ENCODE measurements at regions of chr2 and their contacts with region 1.

Region 1: GRCh38 chr2:190880378-190881073 is at the start of gene GLS:
- DNase-seq: peak; percentile 90 to 98 (median 95)
- ATAC-seq: peak; percentile 76 to 80 (median 79)
- H3K4me3 ChIP-seq: peak within 1 kb of the TSS; percentile 76 to 86
- H3K4me3 Mint-ChIP-seq: peak within 1 kb of the TSS; percentile 92 to 98 (median 96)
- H3K27ac ChIP-seq: peak within 1 kb of the TSS; percentile 93
- H3K27ac Mint-ChIP-seq: peak within 1 kb of the TSS; percentile 97 to 99
- H3K4me1 ChIP-seq: peaks cover 28 to 32% of the 10 kb centered on the region in 2 experiments
- H3K4me1 Mint-ChIP-seq: peaks cover 53 to 59% (median 59%) of the 10 kb centered on the region in 3 donors
- H3K27me3 ChIP-seq: no peaks in the 10 kb centered on the region
- H3K27me3 Mint-ChIP-seq: no peaks in the 10 kb centered on the region
- total RNA-seq, gene GLS: 192 to 233 (median 209) TPM

Region 2: DNA sequence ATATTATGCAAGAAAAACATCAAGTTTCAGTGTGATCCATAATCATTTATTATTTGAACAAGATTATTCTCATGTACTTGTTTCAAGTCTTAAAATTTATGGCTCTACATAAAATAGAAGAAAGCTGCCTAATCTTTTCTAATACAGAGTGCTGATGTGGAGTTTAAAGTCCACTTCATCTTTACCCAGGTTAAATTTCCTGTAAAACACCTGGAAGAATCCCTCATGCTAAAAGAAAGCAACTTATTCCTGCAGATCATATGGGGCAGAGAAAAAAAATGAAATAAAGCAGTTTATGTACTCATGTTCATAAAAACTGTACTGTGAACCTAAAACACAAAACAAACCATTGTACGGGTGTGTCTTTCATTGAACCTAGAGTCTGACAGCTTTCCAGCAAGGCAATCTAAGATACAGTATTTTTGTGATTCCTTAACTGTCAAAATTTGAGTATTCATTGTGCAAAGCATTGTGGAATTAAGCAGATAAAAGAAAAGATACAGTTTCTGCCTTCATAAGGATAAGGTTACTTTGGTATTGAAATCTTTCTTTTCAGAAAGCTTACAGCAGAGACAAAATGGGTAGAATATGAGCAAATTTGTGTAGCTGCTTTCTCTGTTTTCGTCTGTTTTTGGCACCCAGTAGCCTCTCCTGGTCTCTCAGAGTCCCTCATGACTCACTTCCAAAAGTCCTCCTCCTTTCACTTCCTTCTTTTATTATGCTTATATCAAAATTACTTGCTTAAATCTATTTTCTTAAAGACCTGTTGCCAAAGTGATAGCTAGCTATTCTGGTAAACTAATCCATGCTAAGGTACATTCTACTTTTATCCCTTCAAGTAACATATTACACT is 26.8 kb before region 1 on chr2:
- CTCF ChIA-PET with region 1: interaction called, 12 to 22 read pairs
- POLR2A ChIA-PET with region 1: interaction called, 6 to 10 read pairs
- DNase-seq: no peak
- ATAC-seq: no peak
- H3K4me3 ChIP-seq: no peak overlapping the region
- H3K4me3 Mint-ChIP-seq: no peak overlapping the region
- H3K27ac ChIP-seq: no peak overlapping the region
- H3K27ac Mint-ChIP-seq: no peak overlapping the region
- H3K4me1 ChIP-seq: no peaks in the 10 kb centered on the region
- H3K4me1 Mint-ChIP-seq: peaks cover 0 to 2% (median 2%) of the 10 kb centered on the region in 3 donors
- H3K27me3 ChIP-seq: no peaks in the 10 kb centered on the region
- H3K27me3 Mint-ChIP-seq: no peaks in the 10 kb centered on the region

Region 3: GRCh38 chr2:190891372-190891771 is 10.8 kb after region 1 on chr2:
- CTCF ChIA-PET with region 1: interaction called, 5 to 10 read pairs
- POLR2A ChIA-PET with region 1: interaction called, 3 to 33 read pairs
- DNase-seq: no peak
- ATAC-seq: no peak
- H3K4me3 ChIP-seq: no peak overlapping the region
- H3K4me3 Mint-ChIP-seq: no peak overlapping the region
- H3K27ac ChIP-seq: no peak overlapping the region
- H3K27ac Mint-ChIP-seq: peak overlapping the region; percentile 60 to 65
- H3K4me1 ChIP-seq: peaks cover 6 to 27% of the 10 kb centered on the region in 2 experiments
- H3K4me1 Mint-ChIP-seq: peaks cover 71 to 79% (median 74%) of the 10 kb centered on the region in 3 donors
- H3K27me3 ChIP-seq: no peaks in the 10 kb centered on the region
- H3K27me3 Mint-ChIP-seq: no peaks in the 10 kb centered on the region

Region 4: DNA sequence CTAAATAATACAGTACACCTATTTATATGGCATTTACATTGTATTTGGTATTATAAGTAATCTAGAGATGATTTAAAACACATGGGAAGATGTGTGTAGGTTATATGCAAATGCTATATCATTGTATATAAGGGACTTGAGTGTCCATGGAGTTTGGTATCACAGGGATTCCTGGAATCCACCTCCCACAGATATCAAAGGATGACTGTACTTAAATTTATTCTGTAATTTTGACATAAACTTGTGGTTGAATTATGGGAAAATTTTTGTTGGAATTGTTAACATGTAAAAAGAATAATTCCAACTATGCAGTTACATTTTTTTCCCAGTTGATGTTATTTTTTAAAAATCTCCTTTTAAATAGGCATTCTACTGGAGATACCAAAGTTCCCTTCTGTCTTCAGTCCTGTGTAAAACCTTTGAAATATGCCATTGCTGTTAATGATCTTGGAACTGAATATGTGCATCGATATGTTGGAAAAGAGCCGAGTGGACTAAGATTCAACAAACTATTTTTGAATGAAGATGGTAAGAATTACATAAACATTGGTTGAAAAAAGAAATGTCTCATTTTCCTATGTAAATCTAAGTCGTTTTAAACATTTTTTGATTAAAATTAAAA is 24.2 kb after region 1 on chr2:
- CTCF ChIA-PET with region 1: interaction called in 1 of 2 experiments, 3 read pairs
- POLR2A ChIA-PET with region 1: interaction called, 3 to 10 read pairs
- DNase-seq: no peak
- ATAC-seq: no peak
- H3K4me3 ChIP-seq: no peak overlapping the region
- H3K4me3 Mint-ChIP-seq: no peak overlapping the region
- H3K27ac ChIP-seq: no peak overlapping the region
- H3K27ac Mint-ChIP-seq: no peak overlapping the region
- H3K4me1 ChIP-seq: no peaks in the 10 kb centered on the region
- H3K4me1 Mint-ChIP-seq: peaks cover 13 to 15% (median 13%) of the 10 kb centered on the region in 3 donors
- H3K27me3 ChIP-seq: no peaks in the 10 kb centered on the region
- H3K27me3 Mint-ChIP-seq: no peaks in the 10 kb centered on the region

Region 5: GRCh38 chr2:190947711-190948251 is 67.3 kb after region 1 on chr2:
- CTCF ChIA-PET with region 1: interaction called in 1 of 2 experiments, 13 read pairs
- POLR2A ChIA-PET with region 1: interaction called, 5 to 6 read pairs
- DNase-seq: peak in 24 of 35 experiments; percentile 5 to 63 (median 24)
- ATAC-seq: peak; percentile 73 to 90 (median 78)
- H3K4me3 ChIP-seq: no peak overlapping the region
- H3K4me3 Mint-ChIP-seq: peak overlapping the region; percentile 6 to 57 (median 43)
- H3K27ac ChIP-seq: peak overlapping the region; percentile 65
- H3K27ac Mint-ChIP-seq: no peak overlapping the region
- H3K4me1 ChIP-seq: peaks cover 6 to 14% of the 10 kb centered on the region in 2 experiments
- H3K4me1 Mint-ChIP-seq: peaks cover 7 to 17% (median 11%) of the 10 kb centered on the region in 3 donors
- H3K27me3 ChIP-seq: no peaks in the 10 kb centered on the region
- H3K27me3 Mint-ChIP-seq: no peaks in the 10 kb centered on the region

Region 6: GRCh38 chr2:192634557-192634956 is 1754.0 kb after region 1 on chr2:
- CTCF ChIA-PET with region 1: no interaction called
- POLR2A ChIA-PET with region 1: no interaction called
- DNase-seq: no peak
- ATAC-seq: no peak
- H3K4me3 ChIP-seq: no peak overlapping the region
- H3K4me3 Mint-ChIP-seq: no peak overlapping the region
- H3K27ac ChIP-seq: no peak overlapping the region
- H3K27ac Mint-ChIP-seq: no peak overlapping the region
- H3K4me1 ChIP-seq: no peaks in the 10 kb centered on the region
- H3K4me1 Mint-ChIP-seq: no peaks in the 10 kb centered on the region
- H3K27me3 ChIP-seq: no peaks in the 10 kb centered on the region
- H3K27me3 Mint-ChIP-seq: no peaks in the 10 kb centered on the region